ENCODE measurements at regions of chr5 and their contacts with region 1.

Region 1: GRCh38 chr5:54243473-54244080 is 66.8 kb downstream of the ARL15 start:
- DNase-seq: no peak
- H3K4me3 ChIP-seq: no peak overlapping the region
- H3K27me3 ChIP-seq: no peaks in the 10 kb centered on the region
- CTCF ChIP-seq: peak; percentile 76

Region 2: DNA sequence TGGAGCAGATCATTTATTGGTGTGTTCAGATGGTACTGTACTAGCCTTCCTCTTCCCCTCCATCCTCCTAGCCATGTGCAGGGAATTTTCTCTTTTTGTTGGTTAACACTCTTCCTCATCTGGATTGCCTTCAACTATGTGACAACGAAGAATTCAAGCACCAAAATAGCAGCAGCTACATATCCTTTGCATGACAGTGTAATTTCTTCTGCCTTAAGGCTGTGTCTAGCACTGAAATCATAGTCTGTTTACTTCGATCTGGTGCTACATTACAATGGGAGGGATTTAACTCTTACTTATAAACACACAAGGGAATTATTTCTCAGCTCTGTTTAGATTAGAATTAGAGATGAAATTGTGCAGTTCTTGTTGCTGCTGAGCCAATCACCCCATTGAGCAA is 193.6 kb before region 1 on chr5:
- CTCF ChIA-PET with region 1: no interaction called
- POLR2A ChIA-PET with region 1: no interaction called
- DNase-seq: peak; percentile 57
- H3K4me3 ChIP-seq: no peak overlapping the region
- H3K27me3 ChIP-seq: no peaks in the 10 kb centered on the region
- CTCF ChIP-seq: no peak

Region 3: DNA sequence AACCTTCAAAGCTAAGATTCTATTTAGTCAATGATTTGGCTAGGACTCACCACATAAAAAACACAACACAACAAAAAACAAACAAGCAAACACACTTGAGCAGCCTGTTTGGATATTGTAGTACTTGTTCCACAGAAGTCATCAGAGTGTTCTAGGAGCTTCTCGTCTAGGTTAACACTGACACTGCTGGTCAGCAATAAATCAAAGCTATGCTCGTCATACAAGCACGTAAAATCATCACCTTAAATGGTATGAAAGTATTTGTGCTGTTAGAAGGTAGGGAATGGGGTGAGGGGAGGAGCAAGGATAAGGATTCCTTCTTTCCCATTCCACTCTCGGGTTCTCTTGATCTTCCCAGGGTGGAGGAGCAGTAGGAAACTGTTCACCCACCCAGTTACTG is 21.2 kb before region 1 on chr5:
- CTCF ChIA-PET with region 1: no interaction called
- POLR2A ChIA-PET with region 1: no interaction called
- DNase-seq: no peak
- H3K4me3 ChIP-seq: no peak overlapping the region
- H3K27me3 ChIP-seq: no peaks in the 10 kb centered on the region
- CTCF ChIP-seq: no peak

Region 4: GRCh38 chr5:54254482-54255198 is 11.1 kb after region 1 on chr5:
- CTCF ChIA-PET with region 1: interaction called, 11 read pairs
- POLR2A ChIA-PET with region 1: no interaction called
- DNase-seq: no peak
- H3K4me3 ChIP-seq: no peak overlapping the region
- H3K27me3 ChIP-seq: no peaks in the 10 kb centered on the region
- CTCF ChIP-seq: no peak

Region 5: DNA sequence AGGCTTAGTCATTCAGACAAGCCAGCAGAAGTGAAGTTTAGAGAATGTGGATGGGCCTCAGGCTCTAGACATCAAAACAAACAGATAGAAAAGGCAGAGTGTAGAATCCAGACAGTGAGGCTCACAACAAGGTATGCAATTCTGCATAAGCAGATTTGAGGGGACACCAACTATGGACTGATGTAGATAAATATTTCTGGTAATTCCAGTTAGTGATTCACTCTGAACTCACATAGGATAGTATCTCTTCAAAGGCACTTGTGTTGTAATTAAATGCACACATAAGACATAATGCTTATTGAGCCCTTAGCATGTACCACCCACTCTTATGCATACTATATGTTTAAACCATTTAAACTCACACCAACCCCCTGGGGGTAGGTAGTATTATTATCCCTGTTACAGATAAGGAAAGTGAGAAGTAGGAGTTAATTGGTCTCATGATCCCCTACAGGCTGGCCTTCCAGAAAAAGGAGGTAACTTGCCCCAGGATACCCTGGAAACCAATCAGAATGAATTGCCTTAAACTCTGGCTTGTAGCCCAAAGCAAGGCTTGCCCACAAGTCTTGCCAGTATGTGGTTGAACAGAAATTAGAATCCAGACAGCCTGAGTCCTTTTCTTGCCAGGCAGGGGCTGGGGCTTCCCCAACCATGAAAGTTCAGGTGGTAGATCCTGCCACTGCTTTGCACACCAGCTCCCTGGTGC is 172.5 kb after region 1 on chr5:
- CTCF ChIA-PET with region 1: interaction called, 21 read pairs
- POLR2A ChIA-PET with region 1: no interaction called
- DNase-seq: no peak
- H3K4me3 ChIP-seq: no peak overlapping the region
- H3K27me3 ChIP-seq: peaks cover 2% of the 10 kb centered on the region; the same call in 1 of the 2 replicates
- CTCF ChIP-seq: no peak

Region 6: GRCh38 chr5:54895816-54896341 is 652.3 kb after region 1 on chr5:
- CTCF ChIA-PET with region 1: interaction called, 12 read pairs
- POLR2A ChIA-PET with region 1: no interaction called
- DNase-seq: no peak
- H3K4me3 ChIP-seq: no peak overlapping the region
- H3K27me3 ChIP-seq: peaks cover 2% of the 10 kb centered on the region; the same call in 1 of the 2 replicates
- CTCF ChIP-seq: peak; percentile 72